Activated CD8-positive, alpha-beta T cell treated with anti-CD3 and anti-CD28 coated beads, Interleukin-2, amount 10 ng/mL, durations not matched to agents 7 days and 5 days (primary cell): ENCODE measurements at regions of chr19 and their contacts with region 1.

Region 1: DNA sequence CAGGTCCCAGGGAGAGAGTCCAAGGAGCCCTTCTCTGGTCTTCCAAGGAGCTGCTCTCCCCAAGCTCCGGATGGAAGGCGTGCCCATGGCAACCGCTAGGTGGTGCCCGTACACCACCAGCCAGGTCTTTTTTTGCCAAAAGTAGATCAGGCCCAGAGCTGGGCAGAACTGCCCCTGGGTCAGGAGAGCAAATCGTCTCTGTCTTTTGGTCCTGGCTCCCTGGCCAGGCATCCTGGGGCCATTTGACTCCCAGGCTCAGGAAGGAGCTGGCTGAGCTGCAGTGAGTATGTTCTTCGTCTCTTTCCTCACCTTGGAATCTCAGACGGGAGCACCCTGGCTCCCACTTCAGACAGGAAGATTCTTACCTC is 24.6 kb upstream of the BCL3 start:
- DNase-seq: peak; percentile 83
- ATAC-seq: peak; percentile 94
- H3K4me3 Mint-ChIP-seq: no peak overlapping the region
- H3K27ac Mint-ChIP-seq: no peak overlapping the region
- H3K4me1 Mint-ChIP-seq: peaks cover 50% of the 10 kb centered on the region
- H3K27me3 Mint-ChIP-seq: peaks cover 3% of the 10 kb centered on the region

Region 2: DNA sequence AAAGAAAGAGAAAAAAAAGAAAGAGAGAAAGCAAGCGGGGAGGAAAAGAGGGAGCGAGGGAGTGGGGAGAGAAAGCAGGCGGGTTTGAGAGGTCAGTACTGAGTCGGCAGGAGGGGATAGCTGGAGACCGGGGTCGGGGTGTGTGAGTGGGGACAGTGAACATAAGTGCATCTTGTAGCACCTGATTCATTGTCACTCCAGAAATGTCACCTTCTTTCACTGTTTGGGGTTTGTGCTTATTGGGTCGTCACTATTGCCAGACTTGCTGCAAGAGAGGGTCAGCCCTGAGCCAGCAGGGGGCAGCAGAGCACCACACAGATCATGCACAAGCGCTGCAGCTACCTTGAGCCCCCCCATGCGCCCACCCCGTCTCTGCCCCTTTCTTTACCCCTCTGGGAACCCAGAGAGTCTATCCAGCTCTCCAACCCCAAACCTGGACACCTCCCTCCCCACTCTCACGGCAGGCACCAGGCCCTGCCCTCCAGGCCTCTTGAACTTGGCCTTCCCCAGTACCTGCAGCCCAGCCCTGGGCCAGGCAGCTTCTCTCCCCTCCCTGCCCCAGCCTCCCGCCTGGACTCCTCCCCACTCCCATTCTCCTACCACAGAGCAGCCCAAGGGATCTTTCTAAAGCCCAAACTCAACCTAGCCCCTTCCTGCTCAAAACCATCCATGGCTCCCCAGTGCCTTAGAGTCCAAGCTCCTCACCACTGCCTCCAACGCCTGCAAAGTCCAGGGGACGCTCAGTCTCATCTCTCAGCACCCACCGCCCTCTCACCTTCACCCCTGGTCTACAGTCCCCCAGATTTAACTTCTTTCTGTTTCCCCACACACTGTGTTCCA is 34.7 kb before region 1 on chr19:
- CTCF ChIA-PET with region 1: interaction called, 133 read pairs
- POLR2A ChIA-PET with region 1: no interaction called
- DNase-seq: peak; percentile 85
- ATAC-seq: peak; percentile 68
- H3K4me3 Mint-ChIP-seq: no peak overlapping the region
- H3K27ac Mint-ChIP-seq: peak overlapping the region; percentile 55
- H3K4me1 Mint-ChIP-seq: peaks cover 39% of the 10 kb centered on the region
- H3K27me3 Mint-ChIP-seq: peaks cover 22% of the 10 kb centered on the region

Region 3: GRCh38 chr19:44712864-44713515 is 10.9 kb before region 1 on chr19:
- CTCF ChIA-PET with region 1: interaction called, 29 read pairs
- POLR2A ChIA-PET with region 1: no interaction called
- DNase-seq: no peak
- ATAC-seq: no peak
- H3K4me3 Mint-ChIP-seq: no peak overlapping the region
- H3K27ac Mint-ChIP-seq: no peak overlapping the region
- H3K4me1 Mint-ChIP-seq: peaks cover 14% of the 10 kb centered on the region
- H3K27me3 Mint-ChIP-seq: no peaks in the 10 kb centered on the region

Region 4: GRCh38 chr19:44752816-44753618 is 29.1 kb after region 1 on chr19:
- CTCF ChIA-PET with region 1: interaction called, 79 read pairs
- POLR2A ChIA-PET with region 1: interaction called, 9 read pairs
- DNase-seq: peak; percentile 98
- ATAC-seq: peak; percentile 78
- H3K4me3 Mint-ChIP-seq: peak overlapping the region; percentile 89
- H3K27ac Mint-ChIP-seq: peak overlapping the region; percentile 96
- H3K4me1 Mint-ChIP-seq: peaks cover 68% of the 10 kb centered on the region
- H3K27me3 Mint-ChIP-seq: no peaks in the 10 kb centered on the region

Region 5: GRCh38 chr19:44800461-44800860 is 76.5 kb after region 1 on chr19:
- CTCF ChIA-PET with region 1: interaction called, 13 read pairs
- POLR2A ChIA-PET with region 1: no interaction called
- DNase-seq: peak; percentile 93
- ATAC-seq: peak; percentile 100
- H3K4me3 Mint-ChIP-seq: no peak overlapping the region
- H3K27ac Mint-ChIP-seq: no peak overlapping the region
- H3K4me1 Mint-ChIP-seq: peaks cover 27% of the 10 kb centered on the region
- H3K27me3 Mint-ChIP-seq: no peaks in the 10 kb centered on the region